Caco-2 (cell line): ENCODE measurements at regions of chr14 and their contacts with region 1.

Region 1: GRCh38 chr14:75307700-75308379 is 29.2 kb downstream of the FOS start:
- DNase-seq: peak; percentile 83 to 89
- H3K4me3 ChIP-seq: no peak overlapping the region
- H3K4me3 Mint-ChIP-seq: no peak overlapping the region
- H3K27ac Mint-ChIP-seq: no peak overlapping the region
- H3K4me1 ChIP-seq: peaks cover 3% of the 10 kb centered on the region; the same call in 1 of the 2 replicates
- H3K4me1 Mint-ChIP-seq: peaks cover 12% of the 10 kb centered on the region
- H3K27me3 ChIP-seq: no peaks in the 10 kb centered on the region
- H3K27me3 Mint-ChIP-seq: no peaks in the 10 kb centered on the region
- CTCF ChIP-seq: peak; percentile 79 to 93

Region 2: GRCh38 chr14:74913986-74914573 is 393.8 kb before region 1 on chr14:
- CTCF ChIA-PET with region 1: no interaction called
- POLR2A ChIA-PET with region 1: no interaction called
- intact Hi-C with region 1: loop called (anchors 2 kb)
- DNase-seq: peak; percentile 74
- H3K4me3 ChIP-seq: no peak overlapping the region
- H3K4me3 Mint-ChIP-seq: no peak overlapping the region
- H3K27ac Mint-ChIP-seq: no peak overlapping the region
- H3K4me1 ChIP-seq: no peaks in the 10 kb centered on the region
- H3K4me1 Mint-ChIP-seq: no peaks in the 10 kb centered on the region
- H3K27me3 ChIP-seq: no peaks in the 10 kb centered on the region
- H3K27me3 Mint-ChIP-seq: no peaks in the 10 kb centered on the region
- CTCF ChIP-seq: peak; percentile 67 to 87

Region 3: GRCh38 chr14:75132382-75133086 is 175.3 kb before region 1 on chr14:
- CTCF ChIA-PET with region 1: interaction called, 3 read pairs
- POLR2A ChIA-PET with region 1: no interaction called
- intact Hi-C with region 1: loop called (anchors 1 kb)
- DNase-seq: peak; percentile 62 to 80
- H3K4me3 ChIP-seq: no peak overlapping the region
- H3K4me3 Mint-ChIP-seq: no peak overlapping the region
- H3K27ac Mint-ChIP-seq: peak overlapping the region; percentile 51
- H3K4me1 ChIP-seq: 0 out of 2 replicates have a peak, but pooled peaks cover 7% of the 10 kb centered on the region
- H3K4me1 Mint-ChIP-seq: no peaks in the 10 kb centered on the region
- H3K27me3 ChIP-seq: no peaks in the 10 kb centered on the region
- H3K27me3 Mint-ChIP-seq: no peaks in the 10 kb centered on the region
- CTCF ChIP-seq: peak; percentile 62 to 75

Region 4: GRCh38 chr14:75427482-75428229 is 119.8 kb after region 1 on chr14 and contains the start of gene JDP2:
- CTCF ChIA-PET with region 1: interaction called, 5 read pairs
- POLR2A ChIA-PET with region 1: interaction called, 3 read pairs
- intact Hi-C with region 1: loop called (anchors 1 kb)
- DNase-seq: peak; percentile 93 to 96
- H3K4me3 ChIP-seq: peak within 1 kb of the TSS; percentile 84
- H3K4me3 Mint-ChIP-seq: peak within 1 kb of the TSS; percentile 83
- H3K27ac Mint-ChIP-seq: peak within 1 kb of the TSS; percentile 67
- H3K4me1 ChIP-seq: peaks cover 19% of the 10 kb centered on the region
- H3K4me1 Mint-ChIP-seq: peaks cover 18% of the 10 kb centered on the region
- H3K27me3 ChIP-seq: no peaks in the 10 kb centered on the region
- H3K27me3 Mint-ChIP-seq: no peaks in the 10 kb centered on the region
- CTCF ChIP-seq: peak in 1 of 2 experiments; percentile 34
- total RNA-seq, gene JDP2: 95.7 TPM in 2 replicates

Region 5: GRCh38 chr14:75452900-75453747 is 145.3 kb after region 1 on chr14:
- CTCF ChIA-PET with region 1: interaction called, 9 read pairs
- POLR2A ChIA-PET with region 1: no interaction called
- intact Hi-C with region 1: loop called (anchors 1 kb)
- DNase-seq: peak; percentile 88 to 94
- H3K4me3 ChIP-seq: no peak overlapping the region
- H3K4me3 Mint-ChIP-seq: peak overlapping the region; percentile 43
- H3K27ac Mint-ChIP-seq: peak overlapping the region; percentile 82
- H3K4me1 ChIP-seq: peaks cover 77% of the 10 kb centered on the region
- H3K4me1 Mint-ChIP-seq: peaks cover 63% of the 10 kb centered on the region
- H3K27me3 ChIP-seq: no peaks in the 10 kb centered on the region
- H3K27me3 Mint-ChIP-seq: no peaks in the 10 kb centered on the region
- CTCF ChIP-seq: no peak

Region 6: GRCh38 chr14:75487155-75487671 is 179.4 kb after region 1 on chr14:
- CTCF ChIA-PET with region 1: interaction called, 18 read pairs
- POLR2A ChIA-PET with region 1: no interaction called
- intact Hi-C with region 1: loop called (anchors 1 kb)
- DNase-seq: no peak
- H3K4me3 ChIP-seq: no peak overlapping the region
- H3K4me3 Mint-ChIP-seq: no peak overlapping the region
- H3K27ac Mint-ChIP-seq: no peak overlapping the region
- H3K4me1 ChIP-seq: no peaks in the 10 kb centered on the region
- H3K4me1 Mint-ChIP-seq: no peaks in the 10 kb centered on the region
- H3K27me3 ChIP-seq: no peaks in the 10 kb centered on the region
- H3K27me3 Mint-ChIP-seq: no peaks in the 10 kb centered on the region
- CTCF ChIP-seq: no peak

Region 7: DNA sequence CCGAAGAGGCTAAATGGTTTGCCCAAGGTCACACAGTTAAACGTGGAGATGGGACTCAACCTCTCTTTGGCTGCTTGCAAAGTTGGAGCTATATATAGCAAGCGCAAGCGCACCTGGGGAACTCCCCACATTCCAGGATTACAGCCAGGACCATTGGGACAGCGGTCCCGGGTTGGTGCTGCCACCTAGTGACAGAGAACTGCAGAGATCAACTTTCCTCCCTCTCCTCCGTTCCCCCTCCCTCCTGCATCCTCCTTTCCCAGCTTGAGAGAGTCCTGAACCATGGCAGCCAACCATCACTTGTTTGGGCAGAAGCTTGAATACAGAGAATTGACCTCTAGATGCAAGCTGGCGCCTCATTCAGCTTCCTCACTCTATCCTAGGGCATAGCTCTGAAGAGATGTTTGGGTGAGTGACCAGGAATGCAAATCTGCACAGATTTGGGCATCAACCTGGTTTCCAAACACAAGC is 253.2 kb after region 1 on chr14:
- CTCF ChIA-PET with region 1: interaction called, 8 read pairs
- POLR2A ChIA-PET with region 1: no interaction called
- intact Hi-C with region 1: loop called (anchors 1 kb)
- DNase-seq: peak; percentile 87 to 90
- H3K4me3 ChIP-seq: no peak overlapping the region
- H3K4me3 Mint-ChIP-seq: no peak overlapping the region
- H3K27ac Mint-ChIP-seq: no peak overlapping the region
- H3K4me1 ChIP-seq: peaks cover 16% of the 10 kb centered on the region
- H3K4me1 Mint-ChIP-seq: peaks cover 29% of the 10 kb centered on the region
- H3K27me3 ChIP-seq: no peaks in the 10 kb centered on the region
- H3K27me3 Mint-ChIP-seq: peaks cover 3% of the 10 kb centered on the region
- CTCF ChIP-seq: peak; percentile 82 to 87